H1 (cell line): ENCODE measurements at regions of chr11 and their contacts with region 1.

Region 1: DNA sequence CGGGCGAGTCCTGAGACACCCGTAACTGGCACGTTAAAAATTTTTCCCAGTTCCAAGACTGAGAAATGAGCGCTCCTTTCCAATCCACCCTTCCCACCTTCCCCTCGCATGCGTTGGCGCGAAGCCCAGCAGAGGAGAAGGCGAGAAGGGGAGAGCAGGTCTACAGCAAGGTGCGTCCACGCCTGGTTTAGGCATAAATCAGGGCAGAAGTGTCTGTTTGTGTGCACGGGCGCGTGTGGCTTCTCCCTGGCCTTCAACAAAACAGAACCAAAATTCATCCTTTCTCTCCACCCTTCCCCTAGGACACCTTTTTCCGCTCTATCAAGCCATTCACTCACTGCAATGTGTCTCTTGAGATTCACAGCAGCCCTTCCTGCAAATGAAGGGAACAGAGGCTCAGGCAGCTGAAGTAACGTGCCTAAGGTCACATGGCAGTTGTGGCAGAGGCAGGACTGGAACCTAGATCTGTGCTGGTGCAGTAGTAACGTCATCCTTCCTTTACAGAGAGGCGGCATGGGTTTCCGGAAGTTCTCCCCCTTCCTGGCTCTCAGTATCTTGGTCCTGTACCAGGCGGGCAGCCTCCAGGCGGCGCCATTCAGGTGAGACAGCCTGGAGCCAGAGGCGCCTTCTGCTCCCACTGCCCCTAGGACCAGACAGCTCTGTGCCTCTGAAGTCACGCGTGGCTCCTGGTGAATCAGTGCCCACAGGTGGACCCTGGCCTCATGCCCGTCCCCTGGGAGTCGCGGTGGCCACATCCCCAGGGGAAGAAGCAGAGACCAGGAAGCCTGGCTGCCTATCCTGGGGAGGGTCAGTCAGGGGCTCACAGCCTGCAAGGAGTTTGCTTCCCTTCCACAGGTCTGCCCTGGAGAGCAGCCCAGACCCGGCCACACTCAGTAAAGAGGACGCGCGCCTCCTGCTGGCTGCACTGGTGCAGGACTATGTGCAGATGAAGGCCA is 1.1 kb downstream of the CALCB start:
- DNase-seq: peak; percentile 73 to 98
- H3K4me3 ChIP-seq: peak overlapping the region; percentile 40 to 68 (median 56)
- H3K27ac ChIP-seq: no peak overlapping the region; the same call in 1 of the 2 replicates
- H3K4me1 ChIP-seq: peaks cover 0 to 4% (median under 1%) of the 10 kb centered on the region in 4 experiments; a peak in 2 of 7 replicates
- H3K27me3 ChIP-seq: peaks cover 4 to 24% (median 20%) of the 10 kb centered on the region in 4 experiments
- CTCF ChIP-seq: peak; percentile 78 to 93 (median 90)
- EP300 ChIP-seq: no peak
- POLR2A ChIP-seq: no peak
- RAD21 ChIP-seq: peak; percentile 81 to 86

Region 2: DNA sequence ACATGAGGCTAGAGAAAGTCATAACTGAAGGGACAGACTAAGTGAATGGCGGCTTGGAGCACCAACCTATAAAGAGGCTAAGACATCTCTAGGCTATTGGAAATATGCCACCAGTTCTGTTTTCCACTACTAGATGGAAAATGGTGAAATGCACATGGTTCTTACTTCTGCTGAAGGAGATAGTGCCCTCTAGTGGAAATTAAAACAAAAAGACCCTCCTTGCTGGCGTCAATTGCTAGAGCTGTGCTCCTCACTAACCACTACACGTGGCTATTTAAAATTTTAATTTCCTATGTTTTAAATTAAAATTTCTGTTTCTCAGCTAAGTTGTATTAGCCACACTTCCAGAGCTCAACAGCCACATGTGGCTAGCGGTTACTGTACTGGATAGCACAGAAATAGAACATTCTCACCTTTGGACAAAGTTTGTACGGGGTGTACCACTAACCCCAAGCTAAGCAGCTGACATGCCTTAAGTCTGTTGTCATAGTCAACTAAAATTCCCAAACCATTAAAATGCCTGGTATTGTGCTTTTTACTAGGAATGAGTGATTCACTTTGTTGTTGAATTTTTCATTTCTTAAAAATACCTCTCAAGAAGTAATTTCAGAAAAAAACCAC is 68.2 kb before region 1 on chr11:
- CTCF ChIA-PET with region 1: interaction called, 28 read pairs
- POLR2A ChIA-PET with region 1: interaction called, 3 read pairs
- DNase-seq: no peak
- H3K4me3 ChIP-seq: no peak overlapping the region
- H3K27ac ChIP-seq: no peak overlapping the region
- H3K4me1 ChIP-seq: no peaks in the 10 kb centered on the region
- H3K27me3 ChIP-seq: no peaks in the 10 kb centered on the region
- CTCF ChIP-seq: peak in 2 of 3 experiments; percentile 65 to 69; a peak in 3 of 4 replicates
- EP300 ChIP-seq: no peak
- POLR2A ChIP-seq: no peak
- RAD21 ChIP-seq: peak; percentile 73 to 78

Region 3: GRCh38 chr11:15048616-15049015 is 25.9 kb before region 1 on chr11:
- CTCF ChIA-PET with region 1: interaction called, 20 read pairs
- POLR2A ChIA-PET with region 1: no interaction called
- DNase-seq: no peak
- H3K4me3 ChIP-seq: no peak overlapping the region
- H3K27ac ChIP-seq: no peak overlapping the region
- H3K4me1 ChIP-seq: no peaks in the 10 kb centered on the region
- H3K27me3 ChIP-seq: no peaks in the 10 kb centered on the region
- CTCF ChIP-seq: no peak
- EP300 ChIP-seq: no peak
- POLR2A ChIP-seq: no peak
- RAD21 ChIP-seq: no peak

Region 4: GRCh38 chr11:15093432-15093831 is 18.9 kb after region 1 on chr11:
- CTCF ChIA-PET with region 1: interaction called, 37 read pairs
- POLR2A ChIA-PET with region 1: interaction called, 3 read pairs
- DNase-seq: no peak
- H3K4me3 ChIP-seq: no peak overlapping the region
- H3K27ac ChIP-seq: no peak overlapping the region
- H3K4me1 ChIP-seq: no peaks in the 10 kb centered on the region; a peak in 1 of 7 replicates
- H3K27me3 ChIP-seq: no peaks in the 10 kb centered on the region
- CTCF ChIP-seq: no peak
- EP300 ChIP-seq: no peak
- POLR2A ChIP-seq: no peak
- RAD21 ChIP-seq: no peak

Region 5: GRCh38 chr11:15141381-15141780 is 66.9 kb after region 1 on chr11:
- CTCF ChIA-PET with region 1: interaction called, 15 read pairs
- POLR2A ChIA-PET with region 1: no interaction called
- DNase-seq: no peak
- H3K4me3 ChIP-seq: no peak overlapping the region
- H3K27ac ChIP-seq: no peak overlapping the region
- H3K4me1 ChIP-seq: peaks cover 0 to 7% (median 3%) of the 10 kb centered on the region in 4 experiments; a peak in 3 of 7 replicates
- H3K27me3 ChIP-seq: no peaks in the 10 kb centered on the region
- CTCF ChIP-seq: no peak
- EP300 ChIP-seq: no peak
- POLR2A ChIP-seq: no peak
- RAD21 ChIP-seq: no peak